ENCODE measurements at regions of chr6 and their contacts with region 1.

Region 1: DNA sequence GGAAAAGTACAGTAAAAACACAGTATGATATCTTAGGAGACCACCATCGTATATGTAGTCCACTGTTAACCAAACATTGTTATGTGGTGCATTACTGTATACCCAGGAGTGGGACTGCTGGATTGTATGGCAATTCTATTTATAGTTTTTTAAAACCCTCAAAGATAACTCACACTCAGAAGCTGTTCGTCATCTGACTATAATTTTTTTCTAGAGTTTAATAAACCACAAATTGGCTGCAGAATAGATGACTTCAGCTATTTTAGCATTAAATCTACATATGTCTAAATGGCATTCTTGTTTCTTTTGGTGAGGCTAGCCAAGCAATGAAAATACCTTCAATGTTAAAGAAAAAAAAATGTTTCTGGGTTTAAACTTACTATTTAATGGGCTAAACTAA is 134.2 kb upstream of the BMP5 start:
- DNase-seq: no peak

Region 2: DNA sequence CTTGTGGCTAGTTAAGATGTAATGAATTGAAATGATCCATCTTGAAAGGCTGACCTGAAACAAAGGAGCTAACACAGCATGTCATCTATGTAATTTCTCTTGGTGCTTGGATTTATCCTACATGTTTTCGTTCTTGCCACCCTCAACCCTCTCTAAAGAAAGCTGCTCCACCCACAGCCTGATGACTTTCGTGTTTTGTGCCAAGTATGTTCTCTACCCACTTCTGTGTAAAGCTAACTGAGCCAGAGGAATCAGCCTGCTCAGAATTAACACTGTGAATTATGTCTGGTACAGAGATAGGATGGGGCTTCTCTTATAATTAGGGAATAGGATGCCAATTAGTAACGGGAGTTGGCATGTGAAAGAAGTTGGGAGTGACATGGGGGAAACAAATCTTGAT is 1966.3 kb before region 1 on chr6:
- intact Hi-C with region 1: loop called in 1 of 2 experiments (anchors 10 kb)
- DNase-seq: no peak

Region 3: DNA sequence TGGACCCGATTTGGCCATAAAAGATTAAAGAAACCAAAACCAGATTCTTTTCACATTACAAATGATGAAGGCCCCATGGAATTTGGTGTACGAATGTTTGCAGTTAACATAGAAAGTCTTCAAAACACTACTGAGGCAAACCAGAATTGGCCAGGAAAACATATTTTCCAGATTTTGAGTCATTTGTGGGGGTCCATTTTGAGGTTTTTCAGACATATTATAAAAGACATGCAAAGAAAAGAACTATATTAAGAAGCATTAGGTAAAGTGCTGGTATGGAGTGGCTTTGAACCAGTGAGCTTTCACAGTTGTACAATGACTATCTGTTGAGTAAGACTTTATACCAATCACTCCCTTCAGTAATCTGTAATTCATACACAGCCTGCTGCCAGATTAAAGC is 406.6 kb after region 1 on chr6:
- intact Hi-C with region 1: no loop called
- DNase-seq: no peak